ENCODE measurements at regions of chr17 and their contacts with region 1.

Region 1: DNA sequence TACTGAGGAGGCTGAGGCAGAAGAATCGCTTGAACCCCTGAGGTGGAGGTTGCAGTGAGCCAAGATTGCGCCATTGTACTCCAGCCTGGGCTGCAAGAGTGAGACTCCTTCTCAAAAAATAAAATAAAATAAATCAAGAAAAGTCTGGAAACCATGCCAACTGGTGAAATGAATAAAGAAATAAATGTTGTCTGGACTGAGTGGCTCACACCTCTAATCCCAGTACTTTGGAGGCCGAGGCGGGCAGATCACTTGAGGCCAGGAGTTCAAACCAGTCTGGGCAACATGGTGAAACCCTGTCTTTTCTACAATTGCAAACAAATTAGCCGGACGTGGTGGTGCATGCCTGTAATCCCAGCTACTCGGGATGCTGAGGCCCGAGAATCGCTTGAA is 744 bp upstream of the LRRC37A3 start:
- DNase-seq: no peak
- H3K4me3 ChIP-seq: peak overlapping the region; percentile 69
- H3K27me3 ChIP-seq: no peaks in the 10 kb centered on the region
- CTCF ChIP-seq: no peak

Region 2: GRCh38 chr17:64964796-64965195 is 44.8 kb after region 1 on chr17:
- CTCF ChIA-PET with region 1: interaction called, 13 read pairs
- POLR2A ChIA-PET with region 1: no interaction called
- DNase-seq: no peak
- H3K4me3 ChIP-seq: no peak overlapping the region
- H3K27me3 ChIP-seq: no peaks in the 10 kb centered on the region
- CTCF ChIP-seq: no peak

Region 3: GRCh38 chr17:64975329-64976087 is 55.5 kb after region 1 on chr17:
- CTCF ChIA-PET with region 1: no interaction called
- POLR2A ChIA-PET with region 1: no interaction called
- DNase-seq: peak; percentile 76
- H3K4me3 ChIP-seq: peak overlapping the region; percentile 88
- H3K27me3 ChIP-seq: no peaks in the 10 kb centered on the region
- CTCF ChIP-seq: no peak

Region 4: DNA sequence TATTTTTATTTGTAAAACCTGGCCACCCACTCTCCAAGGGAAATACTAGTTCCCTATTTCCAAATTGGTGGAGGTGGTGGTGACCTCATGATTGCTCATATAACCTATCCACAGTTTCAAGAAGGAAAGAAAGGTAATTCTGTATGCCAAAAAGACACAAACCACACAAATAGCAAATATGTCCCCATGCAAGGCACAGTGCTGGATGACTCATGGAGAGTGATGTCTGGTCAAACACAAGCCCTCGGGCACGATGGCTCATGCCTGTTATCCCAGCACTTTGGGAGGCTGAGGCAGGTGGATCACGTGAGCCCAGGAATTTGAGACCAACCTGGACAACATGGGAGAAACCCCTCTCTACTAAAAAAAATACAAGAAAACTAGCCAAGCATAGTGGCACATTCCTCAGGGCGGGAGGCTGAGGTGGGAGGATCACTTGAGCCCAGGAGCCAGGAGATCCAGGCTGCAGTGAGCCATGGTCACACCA is 72.3 kb after region 1 on chr17:
- CTCF ChIA-PET with region 1: no interaction called
- POLR2A ChIA-PET with region 1: no interaction called
- DNase-seq: no peak
- H3K4me3 ChIP-seq: no peak overlapping the region
- H3K27me3 ChIP-seq: no peaks in the 10 kb centered on the region
- CTCF ChIP-seq: no peak

Region 5: DNA sequence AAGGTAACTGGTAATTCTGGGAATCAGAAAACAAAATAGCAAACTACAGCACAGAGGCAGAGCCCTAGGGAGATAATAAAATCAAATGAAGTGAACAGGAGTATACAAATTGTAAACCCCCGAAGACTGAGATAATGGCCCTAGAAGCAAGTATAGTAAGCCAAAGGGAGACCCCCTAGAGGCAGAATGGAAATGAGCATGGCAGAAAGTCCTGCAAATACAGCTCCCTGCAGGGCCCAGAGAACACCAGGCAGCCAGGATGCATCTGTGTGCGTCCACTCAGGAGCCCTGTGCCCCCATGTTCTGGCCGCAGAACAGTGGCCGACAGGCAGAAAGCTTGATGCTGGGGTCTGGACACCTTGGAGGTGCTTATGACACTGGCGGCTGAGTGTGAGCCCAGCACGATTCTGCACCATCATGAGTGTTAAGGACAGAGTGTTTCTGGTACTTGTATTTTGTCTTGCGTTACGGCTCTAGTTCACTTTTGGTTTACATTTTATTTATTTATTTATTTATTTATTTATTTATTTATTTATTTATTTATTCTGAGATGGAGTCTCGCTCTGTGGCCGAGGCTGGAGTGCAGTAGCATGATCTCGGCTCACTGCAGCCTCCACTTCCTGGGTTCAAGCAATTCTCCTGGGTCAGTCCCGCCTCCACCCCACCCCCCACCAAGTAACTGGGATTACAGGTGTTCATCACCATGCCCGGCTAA is 265.8 kb after region 1 on chr17:
- CTCF ChIA-PET with region 1: no interaction called
- POLR2A ChIA-PET with region 1: interaction called, 11 read pairs
- DNase-seq: no peak
- H3K4me3 ChIP-seq: no peak overlapping the region
- H3K27me3 ChIP-seq: no peaks in the 10 kb centered on the region
- CTCF ChIP-seq: no peak